GM12878 (cell line): ENCODE measurements at regions of chr22 and their contacts with region 1.

Region 1: GRCh38 chr22:39908737-39909136 is 7.9 kb downstream of the GRAP2 start:
- DNase-seq: no peak
- ATAC-seq: peak; percentile 64
- H3K4me3 ChIP-seq: peak overlapping the region; percentile 42
- H3K27ac ChIP-seq: peak overlapping the region; percentile 71
- H3K4me1 ChIP-seq: peaks cover 35% of the 10 kb centered on the region
- H3K27me3 ChIP-seq: no peaks in the 10 kb centered on the region
- CTCF ChIP-seq: no peak
- EP300 ChIP-seq: no peak
- POLR2A ChIP-seq: no peak
- RAD21 ChIP-seq: no peak

Region 2: GRCh38 chr22:39825661-39826102 is 83.1 kb before region 1 on chr22:
- CTCF ChIA-PET with region 1: no interaction called
- POLR2A ChIA-PET with region 1: no interaction called
- RAD21 ChIA-PET with region 1: no interaction called
- SMC1A ChIA-PET with region 1: interaction called, 4 read pairs
- in situ Hi-C with region 1: no loop called
- intact Hi-C with region 1: loop called (anchors 2 kb)
- DNase-seq: peak; percentile 66
- ATAC-seq: peak; percentile 99
- H3K4me3 ChIP-seq: no peak overlapping the region
- H3K27ac ChIP-seq: peak overlapping the region; percentile 73
- H3K4me1 ChIP-seq: peaks cover 9% of the 10 kb centered on the region
- H3K27me3 ChIP-seq: no peaks in the 10 kb centered on the region
- CTCF ChIP-seq: no peak
- EP300 ChIP-seq: peak in 1 of 2 experiments; percentile 76; a peak in 3 of 4 replicates
- POLR2A ChIP-seq: no peak
- RAD21 ChIP-seq: no peak

Region 3: GRCh38 chr22:39859903-39860588 is 48.7 kb before region 1 on chr22:
- CTCF ChIA-PET with region 1: interaction called, 4 read pairs
- POLR2A ChIA-PET with region 1: interaction called, 4 read pairs
- RAD21 ChIA-PET with region 1: interaction called, 5 read pairs
- SMC1A ChIA-PET with region 1: interaction called, 5 read pairs
- in situ Hi-C with region 1: no loop called
- intact Hi-C with region 1: loop called (anchors 2 kb)
- DNase-seq: peak; percentile 73
- ATAC-seq: peak; percentile 91
- H3K4me3 ChIP-seq: peak overlapping the region; percentile 44; the same call in 1 of the 2 replicates
- H3K27ac ChIP-seq: peak overlapping the region; percentile 85
- H3K4me1 ChIP-seq: peaks cover 19% of the 10 kb centered on the region
- H3K27me3 ChIP-seq: no peaks in the 10 kb centered on the region
- CTCF ChIP-seq: no peak
- EP300 ChIP-seq: peak; percentile 42 to 50; a peak in 1 of 4 replicates
- POLR2A ChIP-seq: no peak
- RAD21 ChIP-seq: no peak

Region 4: GRCh38 chr22:39868741-39869140 is 40.0 kb before region 1 on chr22:
- CTCF ChIA-PET with region 1: interaction called, 3 read pairs
- POLR2A ChIA-PET with region 1: interaction called, 4 read pairs
- RAD21 ChIA-PET with region 1: interaction called, 8 read pairs
- SMC1A ChIA-PET with region 1: interaction called, 10 read pairs
- in situ Hi-C with region 1: no loop called
- intact Hi-C with region 1: no loop called
- DNase-seq: peak; percentile 58
- ATAC-seq: peak; percentile 78
- H3K4me3 ChIP-seq: peak overlapping the region; percentile 7; the same call in 1 of the 2 replicates
- H3K27ac ChIP-seq: peak overlapping the region; percentile 50; the same call in 1 of the 2 replicates
- H3K4me1 ChIP-seq: peaks cover 18% of the 10 kb centered on the region; the same call in 1 of the 2 replicates
- H3K27me3 ChIP-seq: no peaks in the 10 kb centered on the region
- CTCF ChIP-seq: no peak
- EP300 ChIP-seq: no peak
- POLR2A ChIP-seq: no peak
- RAD21 ChIP-seq: no peak

Region 5: DNA sequence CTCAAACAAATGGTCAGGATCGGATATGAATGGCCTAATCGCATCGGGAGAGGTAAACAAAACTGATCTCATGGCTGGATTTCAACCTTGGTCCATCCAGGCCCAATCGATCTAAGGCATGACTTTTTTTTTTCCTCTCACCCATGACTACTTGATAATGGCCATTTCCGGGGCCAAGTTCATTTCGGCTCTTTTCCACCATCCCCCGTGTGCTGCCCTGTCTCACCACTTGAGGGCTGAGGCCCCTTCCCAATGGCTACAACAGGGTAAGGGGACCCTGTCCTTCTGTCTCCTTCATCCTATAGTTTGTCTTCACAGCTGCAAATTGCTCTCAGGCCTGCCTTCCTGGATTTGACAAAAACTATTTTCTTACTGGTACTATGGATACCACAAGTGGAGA is 18.8 kb after region 1 on chr22:
- CTCF ChIA-PET with region 1: interaction called, 11 read pairs
- POLR2A ChIA-PET with region 1: interaction called, 7 read pairs
- RAD21 ChIA-PET with region 1: interaction called, 24 read pairs
- SMC1A ChIA-PET with region 1: interaction called, 102 read pairs
- in situ Hi-C with region 1: no loop called
- intact Hi-C with region 1: no loop called
- DNase-seq: no peak
- ATAC-seq: no peak
- H3K4me3 ChIP-seq: no peak overlapping the region
- H3K27ac ChIP-seq: no peak overlapping the region; the same call in 1 of the 2 replicates
- H3K4me1 ChIP-seq: peaks cover 22% of the 10 kb centered on the region
- H3K27me3 ChIP-seq: no peaks in the 10 kb centered on the region
- CTCF ChIP-seq: peak in 2 of 3 experiments; percentile 12 to 18; a peak in 1 of 6 replicates
- EP300 ChIP-seq: no peak
- POLR2A ChIP-seq: no peak
- RAD21 ChIP-seq: no peak

Region 6: DNA sequence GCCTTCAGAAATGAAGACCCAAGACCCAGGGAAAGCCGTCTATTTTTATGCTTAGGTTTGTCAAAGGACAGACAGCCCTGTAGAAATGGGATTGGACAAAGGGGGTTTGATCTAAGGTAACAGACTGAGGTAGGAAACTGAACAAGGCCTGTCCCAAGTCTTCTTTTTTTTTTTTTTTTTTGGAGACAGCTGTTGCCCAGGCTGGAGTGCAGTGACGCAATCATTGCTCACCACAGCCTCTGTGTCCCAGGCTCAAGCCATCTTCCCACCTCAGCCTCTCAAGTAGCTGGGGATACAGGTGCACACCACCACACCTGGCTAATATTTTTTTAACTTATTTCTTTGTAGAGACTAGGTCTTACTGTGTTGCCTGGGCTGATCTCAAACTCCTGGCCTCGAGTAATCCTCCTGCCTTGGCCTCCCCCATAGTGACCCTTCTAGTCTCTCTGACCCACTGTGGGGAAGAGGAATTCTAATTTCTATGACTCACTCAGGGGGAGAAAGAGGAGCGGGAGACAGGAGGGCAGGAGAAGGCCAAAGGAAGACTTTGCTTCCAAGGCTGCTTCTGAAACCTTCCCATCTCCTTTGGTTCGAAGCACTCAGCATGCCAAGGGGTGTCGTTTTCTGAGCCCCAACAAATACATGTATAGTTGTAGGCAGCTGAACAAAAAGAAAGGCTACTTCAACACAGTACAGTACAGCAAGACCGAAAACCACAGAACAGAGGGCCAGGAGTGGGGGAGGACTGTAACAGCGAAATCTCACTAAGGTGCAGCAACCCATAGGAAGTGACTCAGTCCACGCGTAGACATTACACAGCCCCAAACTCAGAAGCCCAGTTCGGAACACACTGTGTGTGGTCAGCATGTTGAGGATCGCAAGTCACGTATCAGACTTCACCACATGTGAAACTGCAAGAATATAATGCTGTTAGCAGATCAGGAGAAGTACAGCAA is 52.3 kb after region 1 on chr22:
- CTCF ChIA-PET with region 1: interaction called, 3 read pairs
- POLR2A ChIA-PET with region 1: no interaction called
- RAD21 ChIA-PET with region 1: interaction called, 8 read pairs
- SMC1A ChIA-PET with region 1: interaction called, 16 read pairs
- in situ Hi-C with region 1: no loop called
- intact Hi-C with region 1: loop called (anchors 5 kb)
- DNase-seq: peak; percentile 96
- ATAC-seq: peak; percentile 94
- H3K4me3 ChIP-seq: peak overlapping the region; percentile 33; the same call in 1 of the 2 replicates
- H3K27ac ChIP-seq: peak overlapping the region; percentile 17
- H3K4me1 ChIP-seq: peaks cover 49% of the 10 kb centered on the region
- H3K27me3 ChIP-seq: no peaks in the 10 kb centered on the region
- CTCF ChIP-seq: no peak
- EP300 ChIP-seq: peak; percentile 65 to 86; a peak in 2 of 4 replicates
- POLR2A ChIP-seq: peak; percentile 37; the same call in 1 of the 2 replicates
- RAD21 ChIP-seq: no peak

Region 7: GRCh38 chr22:40031766-40032470 is 123.2 kb after region 1 on chr22:
- CTCF ChIA-PET with region 1: no interaction called
- POLR2A ChIA-PET with region 1: no interaction called
- RAD21 ChIA-PET with region 1: no interaction called
- SMC1A ChIA-PET with region 1: no interaction called
- in situ Hi-C with region 1: no loop called
- intact Hi-C with region 1: no loop called
- DNase-seq: no peak
- ATAC-seq: no peak
- H3K4me3 ChIP-seq: no peak overlapping the region
- H3K27ac ChIP-seq: no peak overlapping the region
- H3K4me1 ChIP-seq: no peaks in the 10 kb centered on the region
- H3K27me3 ChIP-seq: peaks cover 3 to 6% of the 10 kb centered on the region in 2 experiments; a peak in 3 of 4 replicates
- CTCF ChIP-seq: no peak
- EP300 ChIP-seq: no peak
- POLR2A ChIP-seq: no peak
- RAD21 ChIP-seq: no peak